ENCODE measurements at regions of chr5 and their contacts with region 1.

Region 1: DNA sequence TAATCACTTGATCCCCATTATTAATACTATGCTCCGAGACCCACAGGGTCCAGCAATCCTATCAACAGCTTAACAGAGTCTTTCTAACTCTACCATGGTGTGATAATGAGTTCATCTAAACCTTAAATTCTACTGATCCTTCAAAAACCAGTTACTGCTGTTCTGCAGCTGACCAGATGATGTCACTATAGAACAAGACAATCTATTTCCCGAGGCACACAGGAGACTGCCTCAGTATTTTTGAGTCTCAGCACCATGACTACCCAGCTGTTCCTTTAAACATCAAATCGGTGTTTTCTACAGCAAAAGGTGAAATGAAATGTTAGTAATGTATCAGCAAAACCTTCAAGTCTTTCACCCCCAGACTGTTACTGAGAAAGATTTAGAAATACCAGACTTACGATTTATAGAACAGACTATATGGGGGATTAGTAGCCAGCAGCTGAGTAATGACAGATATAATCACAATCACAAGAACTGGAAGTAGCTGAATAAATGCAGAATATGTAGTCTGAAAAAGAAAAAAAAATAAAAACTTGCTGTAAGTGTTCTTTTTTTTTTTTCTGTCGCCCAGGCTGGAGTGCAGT is 16.9 kb downstream of the DNAJC18 start:
- DNase-seq: peak; percentile 63 to 76 (median 68)
- H3K4me3 ChIP-seq: no peak overlapping the region
- H3K4me3 Mint-ChIP-seq: no peak overlapping the region
- H3K27ac ChIP-seq: no peak overlapping the region
- H3K27ac Mint-ChIP-seq: no peak overlapping the region
- H3K4me1 ChIP-seq: no peaks in the 10 kb centered on the region
- H3K4me1 Mint-ChIP-seq: peaks cover 4% of the 10 kb centered on the region
- H3K27me3 ChIP-seq: no peaks in the 10 kb centered on the region
- H3K27me3 Mint-ChIP-seq: peaks cover 0 to 1% (median 0%) of the 10 kb centered on the region in 3 donors
- CTCF ChIP-seq: peak; percentile 81

Region 2: DNA sequence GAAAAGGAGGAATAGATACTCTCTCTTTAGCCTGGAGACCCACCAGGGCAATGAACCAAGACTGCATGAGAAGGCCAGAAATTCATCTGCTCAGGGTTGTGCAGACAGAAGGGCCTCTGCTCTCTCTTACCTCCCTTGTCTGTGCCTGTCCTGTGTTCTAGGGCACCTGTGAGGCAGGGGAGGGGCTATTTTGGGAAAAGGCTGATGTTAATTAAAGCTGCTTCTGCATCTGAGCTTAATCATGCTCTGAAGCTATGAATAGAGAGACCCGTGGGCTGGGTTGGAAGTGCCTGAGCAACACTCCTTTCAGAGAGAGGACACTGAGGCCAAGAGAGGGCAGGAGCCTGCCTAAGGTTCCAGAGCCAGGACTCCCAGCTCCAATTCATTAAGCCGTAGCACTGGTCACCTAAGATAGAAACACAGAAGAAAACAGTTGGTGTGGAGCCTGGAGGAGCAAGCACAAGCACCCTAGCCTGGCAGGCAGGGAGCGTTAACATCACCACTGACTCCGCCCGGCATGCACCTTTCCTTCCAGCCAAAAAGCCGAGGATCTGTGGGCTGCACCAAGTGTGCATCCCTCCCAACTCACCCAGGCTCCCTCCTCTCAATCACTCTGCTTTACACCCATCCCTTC is 91.6 kb after region 1 on chr5:
- intact Hi-C with region 1: loop called (anchors 1 to 2 kb)
- DNase-seq: no peak
- H3K4me3 ChIP-seq: no peak overlapping the region
- H3K4me3 Mint-ChIP-seq: no peak overlapping the region
- H3K27ac ChIP-seq: no peak overlapping the region
- H3K27ac Mint-ChIP-seq: no peak overlapping the region
- H3K4me1 ChIP-seq: peaks cover 33% of the 10 kb centered on the region in 2 donors
- H3K4me1 Mint-ChIP-seq: peaks cover 39% of the 10 kb centered on the region
- H3K27me3 ChIP-seq: no peaks in the 10 kb centered on the region
- H3K27me3 Mint-ChIP-seq: peaks cover 1 to 9% (median 2%) of the 10 kb centered on the region in 3 donors
- CTCF ChIP-seq: peak; percentile 32

Measured in CD14-positive monocyte (primary cell).